Activated T-helper 1 cell treated with anti-CD3 and anti-CD28 coated beads, Interleukin-12 subunit alpha, Interleukin-12 subunit beta, Interleukin-2, Interleukin-4 antibody, amounts not matched to agents 30 ng/mL and 10 ng/mL and 1 ng/mL, durations not matched to agents 14 hours and 24 hours and 36 hours (primary cell): ENCODE measurements at regions of chr2 and their contacts with region 1.

Region 1: DNA sequence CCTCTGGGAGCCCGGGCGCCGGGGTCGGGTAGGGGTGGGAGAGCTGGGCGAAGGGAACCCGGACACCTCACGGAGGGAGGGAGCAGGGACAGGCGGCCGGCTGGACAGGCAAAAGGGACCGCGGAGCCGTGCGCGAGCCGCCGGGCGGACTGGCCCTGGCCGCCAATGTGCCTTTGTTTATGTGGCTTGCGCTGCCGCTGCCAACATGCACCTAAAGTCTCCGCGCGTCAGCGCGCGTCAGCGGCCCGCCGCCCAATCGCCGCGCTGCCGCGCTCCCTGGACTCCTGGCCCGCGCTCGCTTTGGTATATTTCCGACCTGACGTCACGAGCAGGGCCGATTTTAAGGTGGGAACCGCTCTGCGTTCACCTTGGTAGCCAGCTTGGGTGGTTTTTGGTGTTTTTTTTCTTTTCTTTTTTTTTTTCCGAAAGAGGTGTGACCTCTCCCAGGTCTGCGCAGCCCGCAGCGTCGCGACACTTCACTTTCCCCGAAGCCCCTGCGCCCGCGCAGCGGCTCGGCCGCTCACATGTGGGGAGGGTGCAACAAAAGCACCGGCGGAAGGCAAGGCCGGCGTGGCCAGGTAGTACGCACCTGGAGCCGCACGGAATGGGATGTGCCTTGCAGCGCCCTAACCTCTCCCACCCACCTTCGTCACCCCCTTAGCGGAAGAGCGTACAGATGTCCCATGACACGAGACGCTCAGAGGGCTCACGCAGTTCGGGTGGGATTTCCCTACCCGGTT is at the start of gene NR4A2:
- DNase-seq: peak; percentile 84
- H3K4me3 Mint-ChIP-seq: peak within 1 kb of the TSS; percentile 91
- H3K27ac Mint-ChIP-seq: peak within 1 kb of the TSS; percentile 97
- H3K4me1 Mint-ChIP-seq: peaks cover 74% of the 10 kb centered on the region
- H3K27me3 Mint-ChIP-seq: peaks cover 15% of the 10 kb centered on the region
- total RNA-seq, gene NR4A2: 20.5 and 21.9 TPM in 2 replicates

Region 2: GRCh38 chr2:155377266-155377680 is 955.4 kb before region 1 on chr2:
- intact Hi-C with region 1: loop called (anchors 5 kb)
- DNase-seq: no peak
- H3K4me3 Mint-ChIP-seq: no peak overlapping the region
- H3K27ac Mint-ChIP-seq: no peak overlapping the region
- H3K4me1 Mint-ChIP-seq: peaks cover 10% of the 10 kb centered on the region
- H3K27me3 Mint-ChIP-seq: peaks cover 5% of the 10 kb centered on the region

Region 3: DNA sequence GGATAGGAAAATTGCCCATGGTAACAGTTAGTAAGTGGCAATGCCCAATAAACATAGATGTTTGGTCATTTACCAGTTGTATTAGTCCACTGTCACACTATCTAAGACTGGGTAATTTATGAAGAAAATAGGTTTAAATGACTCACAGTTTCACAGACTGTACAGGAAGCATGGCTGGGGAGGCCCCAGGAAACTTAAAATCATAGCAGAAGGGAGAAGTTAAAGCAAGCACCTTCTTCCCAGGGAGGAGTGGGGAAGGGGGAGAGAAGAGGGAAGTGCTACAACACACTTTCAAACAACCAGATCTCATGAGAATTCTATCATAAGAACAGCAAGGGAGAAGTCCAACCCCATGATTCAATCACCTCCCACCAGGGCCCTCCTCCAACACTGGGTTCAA is 23.5 kb before region 1 on chr2:
- intact Hi-C with region 1: no loop called
- DNase-seq: no peak
- H3K4me3 Mint-ChIP-seq: no peak overlapping the region
- H3K27ac Mint-ChIP-seq: no peak overlapping the region
- H3K4me1 Mint-ChIP-seq: peaks cover 8% of the 10 kb centered on the region
- H3K27me3 Mint-ChIP-seq: peaks cover 21% of the 10 kb centered on the region

Region 4: DNA sequence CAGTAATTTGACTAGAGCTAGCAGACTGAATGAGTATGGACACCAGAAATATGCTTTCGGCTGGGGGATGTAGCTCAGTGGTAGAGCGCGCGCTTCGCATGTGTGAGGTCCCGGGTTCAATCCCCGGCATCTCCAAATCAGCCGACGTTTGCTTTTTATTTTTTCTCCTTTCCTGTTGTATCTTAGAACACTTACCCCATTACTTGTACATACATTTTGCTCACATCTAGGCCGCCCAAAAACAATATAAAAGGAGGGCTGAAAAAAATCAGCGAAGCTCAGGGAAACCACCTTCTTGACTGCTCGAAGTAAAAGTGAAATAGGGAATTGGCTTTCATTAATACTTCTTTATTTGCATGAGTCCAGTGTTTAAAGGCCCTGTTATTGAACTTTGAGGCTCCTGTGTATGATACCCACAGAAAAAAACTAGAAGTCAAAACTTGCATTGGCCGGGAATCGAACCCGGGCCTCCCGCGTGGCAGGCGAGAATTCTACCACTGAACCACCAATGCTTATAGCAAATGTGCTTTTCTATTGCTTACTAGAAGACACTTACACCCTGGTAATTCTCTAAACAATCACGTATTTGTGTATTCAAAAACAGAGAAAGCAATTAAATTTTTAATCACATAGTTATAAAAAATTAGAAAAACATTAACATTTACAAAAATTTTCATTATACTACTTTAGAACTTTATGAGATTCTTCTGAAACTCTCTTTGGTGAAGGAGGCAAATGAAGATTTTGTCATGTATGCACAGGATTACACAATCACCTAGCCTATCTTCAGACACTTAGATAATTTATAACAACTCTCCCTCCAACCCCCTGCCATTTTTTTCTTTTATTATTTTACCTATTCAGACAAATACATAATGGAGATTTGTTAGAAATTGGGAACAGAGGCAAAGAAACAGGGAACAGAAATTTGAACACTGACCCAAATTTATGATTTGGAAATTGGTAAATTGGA is 68.3 kb after region 1 on chr2:
- intact Hi-C with region 1: loop called (anchors 1 kb)
- DNase-seq: peak; percentile 70
- H3K4me3 Mint-ChIP-seq: peak overlapping the region; percentile 95
- H3K27ac Mint-ChIP-seq: peak overlapping the region; percentile 91
- H3K4me1 Mint-ChIP-seq: peaks cover 37% of the 10 kb centered on the region
- H3K27me3 Mint-ChIP-seq: peaks cover 4% of the 10 kb centered on the region

Region 5: GRCh38 chr2:156526950-156527636 is 194.4 kb after region 1 on chr2:
- intact Hi-C with region 1: loop called (anchors 2 kb)
- DNase-seq: no peak
- H3K4me3 Mint-ChIP-seq: no peak overlapping the region
- H3K27ac Mint-ChIP-seq: no peak overlapping the region
- H3K4me1 Mint-ChIP-seq: peaks cover 5% of the 10 kb centered on the region
- H3K27me3 Mint-ChIP-seq: no peaks in the 10 kb centered on the region

Region 6: GRCh38 chr2:157261199-157261783 is 928.6 kb after region 1 on chr2:
- intact Hi-C with region 1: loop called (anchors 1 kb)
- DNase-seq: peak; percentile 12
- H3K4me3 Mint-ChIP-seq: peak overlapping the region; percentile 57
- H3K27ac Mint-ChIP-seq: peak overlapping the region; percentile 86
- H3K4me1 Mint-ChIP-seq: peaks cover 37% of the 10 kb centered on the region
- H3K27me3 Mint-ChIP-seq: peaks cover 2% of the 10 kb centered on the region

Region 7: GRCh38 chr2:157628477-157629415 is 1296.0 kb after region 1 on chr2 and contains the start of gene ACVR1C:
- intact Hi-C with region 1: loop called (anchors 10 kb)
- DNase-seq: peak; percentile 63
- H3K4me3 Mint-ChIP-seq: peak within 1 kb of the TSS; percentile 88
- H3K27ac Mint-ChIP-seq: peak within 1 kb of the TSS; percentile 55
- H3K4me1 Mint-ChIP-seq: peaks cover 28% of the 10 kb centered on the region
- H3K27me3 Mint-ChIP-seq: peaks cover 15% of the 10 kb centered on the region
- total RNA-seq, gene ACVR1C: 0.59 and 1.1 TPM in 2 replicates